ENCODE measurements at regions of chr10 and their contacts with region 1.

Region 1: GRCh38 chr10:102132563-102133372 is at the start of gene PPRC1:
- DNase-seq: peak; percentile 100
- ATAC-seq: peak; percentile 92
- H3K4me3 ChIP-seq: peak within 1 kb of the TSS; percentile 93
- H3K27ac ChIP-seq: peak within 1 kb of the TSS; percentile 98
- H3K4me1 ChIP-seq: peaks cover 27 to 41% of the 10 kb centered on the region in 2 experiments
- H3K27me3 ChIP-seq: no peaks in the 10 kb centered on the region
- CTCF ChIP-seq: peak in 2 of 3 experiments; percentile 96 to 99; a peak in 4 of 6 replicates
- POLR2A ChIP-seq: peak; percentile 74
- RAD21 ChIP-seq: no peak
- total RNA-seq, gene PPRC1: 93.0 TPM

Region 2: GRCh38 chr10:102055647-102056419 is 76.9 kb before region 1 on chr10 and contains the start of gene ARMH3:
- CTCF ChIA-PET with region 1: no interaction called
- POLR2A ChIA-PET with region 1: no interaction called
- RAD21 ChIA-PET with region 1: no interaction called
- intact Hi-C with region 1: loop called (anchors 1 kb)
- DNase-seq: peak; percentile 99
- ATAC-seq: peak; percentile 85
- H3K4me3 ChIP-seq: peak within 1 kb of the TSS; percentile 77 to 91
- H3K27ac ChIP-seq: peak within 1 kb of the TSS; percentile 90
- H3K4me1 ChIP-seq: peaks cover 40 to 52% of the 10 kb centered on the region in 2 experiments
- H3K27me3 ChIP-seq: no peaks in the 10 kb centered on the region
- CTCF ChIP-seq: no peak
- POLR2A ChIP-seq: peak; percentile 84
- RAD21 ChIP-seq: no peak
- total RNA-seq, gene ARMH3: 30.4 TPM

Region 3: DNA sequence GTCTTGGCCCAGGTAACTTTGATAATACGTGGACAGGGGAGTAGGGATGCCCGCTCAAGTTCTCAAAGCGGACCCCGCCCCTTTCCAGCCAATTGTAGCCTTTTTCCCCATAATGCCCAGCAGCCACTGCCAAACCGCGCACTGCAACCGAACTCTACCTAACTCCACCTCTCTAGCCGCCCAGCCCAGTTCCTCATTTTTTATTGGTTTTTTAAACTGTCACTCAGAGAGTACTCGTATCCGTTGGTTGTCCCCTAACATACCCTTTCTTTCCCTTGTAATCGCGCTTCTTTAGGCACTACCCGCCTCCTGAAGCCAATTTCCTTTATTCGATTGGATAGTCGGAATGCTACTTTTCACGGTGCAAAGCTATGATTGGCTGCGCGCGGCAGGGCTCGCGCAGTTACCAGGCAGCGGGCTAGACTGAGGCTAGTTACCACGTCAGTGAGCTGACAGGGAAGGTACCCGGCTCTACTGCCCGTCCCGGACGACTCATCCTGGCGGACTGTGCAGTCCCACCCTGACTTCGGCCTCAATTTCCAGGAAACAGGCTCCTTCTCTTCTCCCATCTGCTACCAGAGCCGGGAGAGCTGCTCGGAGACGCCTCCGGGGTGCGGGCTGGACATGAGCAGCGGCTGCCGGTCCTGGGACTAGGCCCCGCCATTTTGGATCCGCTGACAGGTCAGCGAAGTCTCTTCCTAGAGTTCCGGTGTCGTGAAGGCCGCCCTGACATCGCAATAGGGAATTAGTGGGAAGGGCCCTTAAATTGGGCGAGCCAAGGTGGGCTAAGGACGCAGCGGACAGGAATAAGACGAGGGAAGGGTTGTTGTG is 112.5 kb after region 1 on chr10 and contains the start of gene GBF1:
- CTCF ChIA-PET with region 1: no interaction called
- POLR2A ChIA-PET with region 1: no interaction called
- RAD21 ChIA-PET with region 1: no interaction called
- intact Hi-C with region 1: no loop called
- DNase-seq: peak; percentile 100
- ATAC-seq: peak; percentile 88
- H3K4me3 ChIP-seq: peak within 1 kb of the TSS; percentile 91 to 95
- H3K27ac ChIP-seq: peak within 1 kb of the TSS; percentile 61
- H3K4me1 ChIP-seq: peaks cover 24 to 54% of the 10 kb centered on the region in 2 experiments
- H3K27me3 ChIP-seq: no peaks in the 10 kb centered on the region
- CTCF ChIP-seq: no peak
- POLR2A ChIP-seq: peak; percentile 87
- RAD21 ChIP-seq: no peak
- total RNA-seq, gene GBF1: 58.9 TPM